ENCODE measurements at regions of chr9 and their contacts with region 1.

Region 1: DNA sequence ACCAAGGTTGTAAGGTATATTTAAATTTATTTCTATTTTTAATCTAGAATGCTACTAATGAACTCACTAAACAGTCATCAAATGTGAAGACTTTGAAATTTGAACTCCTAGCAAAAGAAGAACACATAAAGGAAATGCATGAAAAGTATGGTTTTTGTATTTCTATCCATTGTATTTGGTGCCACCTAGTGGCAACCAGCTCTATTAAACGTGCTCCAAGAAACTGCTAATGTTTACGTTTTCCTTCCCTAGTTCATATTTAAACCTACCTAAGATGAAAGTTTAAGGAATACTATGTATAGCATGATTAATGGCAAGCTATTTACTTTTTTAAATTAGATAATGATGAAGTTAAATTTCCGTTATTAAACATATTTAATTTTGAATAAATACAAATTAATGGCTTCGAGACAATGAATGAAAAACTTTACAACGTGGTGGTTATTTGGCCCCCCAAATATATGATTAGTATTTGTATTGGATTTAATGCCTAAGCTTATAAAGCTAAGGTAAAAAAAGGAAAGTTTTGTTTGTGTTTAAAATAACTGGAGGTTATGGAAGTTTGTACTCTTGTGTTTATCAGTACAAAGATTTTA is 115.9 kb upstream of the SH3GL2 start:
- DNase-seq: no peak
- ATAC-seq: peak in 1 of 2 donors; percentile 62
- H3K4me3 ChIP-seq: no peak overlapping the region
- H3K27ac ChIP-seq: no peak overlapping the region
- H3K4me1 ChIP-seq: no peaks in the 10 kb centered on the region
- H3K27me3 ChIP-seq: no peaks in the 10 kb centered on the region
- CTCF ChIP-seq: peak; percentile 76

Region 2: DNA sequence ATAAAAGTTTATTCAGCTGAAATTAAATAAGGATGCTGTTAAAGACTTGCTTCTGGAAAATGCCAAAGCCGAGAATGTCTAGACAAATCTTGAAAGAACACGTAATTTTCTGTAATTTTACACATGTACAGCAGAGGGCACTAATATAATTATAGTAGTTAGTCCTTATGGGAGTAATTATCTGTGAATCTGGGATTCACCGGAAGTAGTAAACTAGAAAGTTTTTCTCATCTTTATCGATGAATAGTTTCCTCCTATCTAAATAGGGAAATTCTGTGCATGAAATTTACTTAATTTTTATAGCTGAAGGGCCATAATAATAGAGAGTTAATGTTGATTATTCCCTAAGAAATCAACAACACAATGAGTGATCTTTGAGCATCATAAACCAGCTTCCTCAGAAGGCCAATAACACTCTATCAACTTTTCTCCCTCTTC is 346.5 kb before region 1 on chr9:
- intact Hi-C with region 1: loop called (anchors 5 kb)
- DNase-seq: no peak
- ATAC-seq: peak in 1 of 2 donors; percentile 61
- H3K4me3 ChIP-seq: no peak overlapping the region
- H3K27ac ChIP-seq: no peak overlapping the region
- H3K4me1 ChIP-seq: no peaks in the 10 kb centered on the region
- H3K27me3 ChIP-seq: no peaks in the 10 kb centered on the region
- CTCF ChIP-seq: peak; percentile 49

Region 3: GRCh38 chr9:17630531-17631337 is 167.8 kb after region 1 on chr9:
- intact Hi-C with region 1: no loop called
- DNase-seq: no peak
- ATAC-seq: no peak
- H3K4me3 ChIP-seq: no peak overlapping the region
- H3K27ac ChIP-seq: no peak overlapping the region
- H3K4me1 ChIP-seq: no peaks in the 10 kb centered on the region
- H3K27me3 ChIP-seq: no peaks in the 10 kb centered on the region
- CTCF ChIP-seq: no peak